ENCODE measurements at regions of chr1 and their contacts with region 1.

Region 1: DNA sequence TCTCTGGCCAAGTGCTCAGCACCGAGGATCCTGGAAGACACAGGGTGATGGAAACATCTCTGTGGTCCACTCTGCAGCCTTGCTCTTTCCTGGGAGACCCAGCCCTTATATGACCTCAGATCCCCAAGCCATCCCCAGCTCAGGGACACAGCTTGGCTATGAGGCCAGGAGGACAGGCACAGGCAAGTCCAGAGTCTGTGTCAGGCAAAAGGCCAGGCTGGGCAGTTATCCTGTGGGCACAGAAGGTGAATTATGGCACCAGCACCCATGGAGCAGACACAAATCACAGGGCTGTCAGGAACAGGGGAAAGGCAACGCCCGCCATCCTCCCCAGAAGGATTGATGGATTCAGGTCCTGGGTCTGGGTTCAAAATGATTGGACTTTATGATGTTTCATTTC is 52.1 kb upstream of the SCMH1 start:
- DNase-seq: no peak
- H3K4me3 ChIP-seq: no peak overlapping the region
- H3K27ac ChIP-seq: no peak overlapping the region
- H3K4me1 ChIP-seq: no peaks in the 10 kb centered on the region
- H3K27me3 ChIP-seq: peaks cover 0 to 11% (median 7%) of the 10 kb centered on the region in 5 experiments

Region 2: DNA sequence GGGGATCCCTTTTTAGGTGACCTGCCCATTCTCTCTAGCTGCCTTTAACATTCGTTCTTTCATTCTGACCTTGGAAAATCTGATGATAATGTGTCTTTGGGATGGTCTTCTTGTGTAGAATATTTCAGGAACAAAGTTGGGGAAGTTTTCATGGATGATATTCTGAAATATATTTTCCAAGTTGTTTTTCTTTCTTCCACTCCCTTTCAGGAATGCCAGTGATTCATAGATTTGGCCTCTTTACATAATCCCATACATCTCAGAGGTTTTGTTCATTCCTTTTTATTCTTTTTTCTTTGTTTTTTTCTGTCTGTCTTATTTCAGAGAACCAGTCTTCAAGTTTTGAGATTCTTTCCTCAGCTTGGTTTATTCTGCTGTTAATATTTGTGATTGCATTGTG is 38.2 kb before region 1 on chr1:
- CTCF ChIA-PET with region 1: no interaction called
- POLR2A ChIA-PET with region 1: no interaction called
- DNase-seq: no peak
- H3K4me3 ChIP-seq: no peak overlapping the region
- H3K27ac ChIP-seq: no peak overlapping the region
- H3K4me1 ChIP-seq: no peaks in the 10 kb centered on the region
- H3K27me3 ChIP-seq: no peaks in the 10 kb centered on the region

Region 3: GRCh38 chr1:41268154-41268770 is 26.0 kb before region 1 on chr1:
- CTCF ChIA-PET with region 1: no interaction called
- POLR2A ChIA-PET with region 1: no interaction called
- DNase-seq: peak; percentile 62 to 73 (median 65)
- H3K4me3 ChIP-seq: peak overlapping the region in 1 of 7 experiments; percentile 23
- H3K27ac ChIP-seq: no peak overlapping the region
- H3K4me1 ChIP-seq: peaks cover 0 to 2% (median 0%) of the 10 kb centered on the region in 4 experiments
- H3K27me3 ChIP-seq: peaks cover 0 to 4% (median 0%) of the 10 kb centered on the region in 5 experiments

Region 4: DNA sequence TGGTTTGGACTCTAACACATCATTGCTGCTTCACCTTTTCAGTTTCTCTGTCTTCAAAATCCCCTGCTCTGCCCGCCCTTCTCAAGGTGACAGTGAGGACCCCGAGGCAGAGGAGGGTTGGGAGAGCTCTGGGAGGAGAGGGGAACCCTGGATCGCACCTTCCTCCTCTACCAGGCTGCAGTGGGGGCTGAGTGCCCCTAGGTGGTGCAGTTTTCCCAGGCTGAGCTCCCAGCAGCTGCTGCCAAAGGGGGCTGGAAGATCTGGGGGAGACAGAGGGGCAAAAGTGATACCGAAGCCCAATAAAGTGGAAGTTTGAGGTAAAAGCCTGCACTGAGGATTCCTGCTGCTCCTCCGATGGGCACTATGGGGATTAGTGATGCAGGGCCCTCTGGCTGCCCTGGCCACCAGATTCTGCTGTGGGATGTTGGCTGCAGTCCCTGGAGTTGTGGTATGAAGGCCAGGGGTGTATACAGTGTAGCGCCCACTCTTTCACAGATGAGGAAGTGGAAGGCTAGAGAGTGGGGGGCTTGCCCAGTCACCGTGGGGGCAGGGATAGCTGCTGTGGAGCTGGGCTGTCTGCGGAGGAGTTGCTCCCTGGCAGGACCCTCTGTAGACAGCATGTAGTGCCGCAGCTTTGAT is 11.4 kb before region 1 on chr1:
- CTCF ChIA-PET with region 1: interaction called, 15 read pairs
- POLR2A ChIA-PET with region 1: no interaction called
- DNase-seq: peak; percentile 24 to 56 (median 53)
- H3K4me3 ChIP-seq: no peak overlapping the region
- H3K27ac ChIP-seq: no peak overlapping the region
- H3K4me1 ChIP-seq: peaks cover 0 to 6% (median 4%) of the 10 kb centered on the region in 4 experiments
- H3K27me3 ChIP-seq: peaks cover 0 to 18% (median under 1%) of the 10 kb centered on the region in 5 experiments

Measured in common myeloid progenitor, CD34-positive (primary cell).